ENCODE measurements at regions of chr2 and their contacts with region 1.

Region 1: DNA sequence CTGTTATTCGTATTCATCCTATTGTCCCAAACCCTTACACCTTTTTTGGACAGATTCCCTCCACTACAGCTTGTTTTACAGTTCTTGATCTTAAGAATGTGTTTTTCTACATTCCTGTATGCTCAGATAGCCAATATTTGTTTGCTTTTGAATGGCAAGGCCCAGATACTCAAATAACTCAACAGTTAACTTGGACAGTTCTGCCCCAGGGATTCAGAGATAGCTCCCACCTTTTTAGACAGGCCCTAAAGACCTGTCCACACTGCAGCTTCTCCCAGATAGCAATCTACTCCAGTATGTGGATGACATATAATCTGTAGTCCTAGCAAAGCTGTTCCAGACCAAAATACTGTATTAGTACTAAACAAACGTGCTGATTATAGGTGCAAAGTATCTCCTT is 7.1 kb upstream of the AGXT start:
- DNase-seq: no peak
- H3K4me3 ChIP-seq: no peak overlapping the region
- H3K4me3 Mint-ChIP-seq: no peak overlapping the region
- H3K27ac ChIP-seq: no peak overlapping the region
- H3K27ac Mint-ChIP-seq: no peak overlapping the region
- H3K4me1 ChIP-seq: no peaks in the 10 kb centered on the region
- H3K4me1 Mint-ChIP-seq: no peaks in the 10 kb centered on the region
- H3K27me3 ChIP-seq: no peaks in the 10 kb centered on the region
- H3K27me3 Mint-ChIP-seq: peaks cover 0 to under 1% of the 10 kb centered on the region in 2 donors

Region 2: GRCh38 chr2:240851078-240851991 is 10.2 kb before region 1 on chr2:
- CTCF ChIA-PET with region 1: interaction called, 16 read pairs
- POLR2A ChIA-PET with region 1: no interaction called
- intact Hi-C with region 1: no loop called
- DNase-seq: peak; percentile 70 to 80 (median 76)
- H3K4me3 ChIP-seq: no peak overlapping the region
- H3K4me3 Mint-ChIP-seq: no peak overlapping the region
- H3K27ac ChIP-seq: no peak overlapping the region
- H3K27ac Mint-ChIP-seq: no peak overlapping the region
- H3K4me1 ChIP-seq: no peaks in the 10 kb centered on the region
- H3K4me1 Mint-ChIP-seq: no peaks in the 10 kb centered on the region
- H3K27me3 ChIP-seq: no peaks in the 10 kb centered on the region
- H3K27me3 Mint-ChIP-seq: peaks cover 0 to 1% of the 10 kb centered on the region in 2 donors

Region 3: DNA sequence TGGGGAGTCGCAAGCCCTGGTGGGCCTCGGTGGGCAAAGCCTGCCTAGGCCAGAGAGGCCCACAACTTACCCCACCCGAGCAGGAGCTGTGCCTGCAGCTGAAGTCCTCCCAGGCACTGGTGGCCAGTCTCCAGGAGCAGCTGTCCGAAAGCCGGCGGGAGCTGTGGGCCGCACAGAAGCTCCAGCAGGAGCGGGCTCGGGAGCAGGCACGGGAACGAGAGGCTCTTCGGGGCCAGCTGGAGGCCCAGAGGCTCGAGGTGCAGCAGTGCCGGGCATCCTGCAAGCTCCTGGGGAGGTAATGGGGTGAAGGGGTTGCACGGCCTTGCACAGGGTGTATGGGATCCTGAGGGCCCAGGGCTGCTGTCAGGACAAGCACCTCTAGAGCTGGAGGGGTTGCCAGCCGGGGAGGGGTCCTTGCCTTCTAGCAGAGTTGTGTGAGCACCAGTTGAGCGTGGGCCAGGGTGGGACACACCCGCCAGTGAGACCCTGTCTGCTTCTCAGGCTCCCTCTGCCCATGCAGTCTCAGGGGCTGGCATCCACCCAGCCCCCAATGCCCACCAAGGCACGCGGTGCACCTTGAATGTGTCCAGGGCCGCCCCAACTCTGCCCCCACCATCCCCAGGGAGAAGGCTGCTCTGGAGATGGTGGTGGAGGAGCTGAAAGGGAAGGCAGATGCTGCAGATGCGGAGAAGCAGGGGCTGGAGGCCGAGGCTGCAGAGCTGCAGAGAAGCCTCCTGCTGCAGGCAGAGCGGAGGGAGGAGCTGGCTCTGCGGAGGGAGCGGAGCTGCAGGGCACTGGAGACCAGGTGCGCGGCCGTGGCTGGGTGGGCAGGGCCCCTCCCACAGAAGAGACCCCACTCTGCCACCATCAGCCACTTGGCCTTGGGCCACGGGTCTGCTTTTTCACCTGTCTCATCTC is 71.8 kb after region 1 on chr2:
- CTCF ChIA-PET with region 1: no interaction called
- POLR2A ChIA-PET with region 1: no interaction called
- intact Hi-C with region 1: no loop called
- DNase-seq: no peak
- H3K4me3 ChIP-seq: no peak overlapping the region
- H3K4me3 Mint-ChIP-seq: no peak overlapping the region
- H3K27ac ChIP-seq: no peak overlapping the region
- H3K27ac Mint-ChIP-seq: no peak overlapping the region
- H3K4me1 ChIP-seq: no peaks in the 10 kb centered on the region
- H3K4me1 Mint-ChIP-seq: no peaks in the 10 kb centered on the region
- H3K27me3 ChIP-seq: no peaks in the 10 kb centered on the region
- H3K27me3 Mint-ChIP-seq: peaks cover 3 to 6% of the 10 kb centered on the region in 2 donors

Measured in CD4-positive, alpha-beta memory T cell (primary cell).